ENCODE measurements at regions of chr5 and their contacts with region 1.

Region 1: GRCh38 chr5:39217365-39218281 is 1.7 kb downstream of the FYB1 start:
- DNase-seq: peak; percentile 87
- ATAC-seq: peak; percentile 74
- H3K4me3 Mint-ChIP-seq: peak overlapping the region; percentile 77
- H3K27ac Mint-ChIP-seq: peak overlapping the region; percentile 97
- H3K4me1 Mint-ChIP-seq: peaks cover 86% of the 10 kb centered on the region
- H3K27me3 Mint-ChIP-seq: no peaks in the 10 kb centered on the region

Region 2: DNA sequence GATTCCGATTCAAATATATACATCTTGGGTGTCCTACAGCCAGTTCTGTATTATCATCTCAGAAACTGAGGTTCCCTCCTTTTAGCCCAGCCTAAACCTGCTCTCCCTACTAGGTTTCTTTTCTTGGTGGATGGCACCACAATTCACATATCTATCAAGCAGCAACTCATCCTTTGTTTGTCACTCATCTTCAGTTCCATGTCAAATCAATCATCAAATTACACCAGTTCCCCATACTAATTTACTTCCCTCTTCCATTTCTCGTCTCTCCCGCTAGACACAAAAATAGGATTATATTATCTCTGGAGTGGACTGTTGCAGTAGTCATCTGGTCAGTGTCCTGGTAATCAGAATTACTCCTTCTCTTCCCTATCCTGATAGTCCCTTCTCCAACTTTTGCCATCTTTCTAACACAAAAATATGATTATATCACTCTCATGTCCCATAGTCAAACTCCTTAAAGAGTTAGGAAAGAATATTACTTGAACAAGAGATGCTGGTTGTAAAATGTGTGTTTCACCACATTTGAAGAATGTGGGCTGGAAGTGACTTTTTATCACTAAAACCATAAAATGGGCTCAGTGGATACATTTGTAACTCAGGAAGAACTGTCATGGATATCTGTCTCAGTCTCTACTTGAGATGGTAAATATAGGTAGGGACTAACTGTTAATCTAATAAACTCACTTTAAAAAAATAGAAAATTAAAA is 74.3 kb before region 1 on chr5:
- CTCF ChIA-PET with region 1: interaction called, 20 read pairs
- POLR2A ChIA-PET with region 1: no interaction called
- intact Hi-C with region 1: loop called in 1 of 2 experiments (anchors 2 kb)
- DNase-seq: no peak
- ATAC-seq: no peak
- H3K4me3 Mint-ChIP-seq: no peak overlapping the region
- H3K27ac Mint-ChIP-seq: no peak overlapping the region
- H3K4me1 Mint-ChIP-seq: peaks cover 40% of the 10 kb centered on the region
- H3K27me3 Mint-ChIP-seq: no peaks in the 10 kb centered on the region

Region 3: DNA sequence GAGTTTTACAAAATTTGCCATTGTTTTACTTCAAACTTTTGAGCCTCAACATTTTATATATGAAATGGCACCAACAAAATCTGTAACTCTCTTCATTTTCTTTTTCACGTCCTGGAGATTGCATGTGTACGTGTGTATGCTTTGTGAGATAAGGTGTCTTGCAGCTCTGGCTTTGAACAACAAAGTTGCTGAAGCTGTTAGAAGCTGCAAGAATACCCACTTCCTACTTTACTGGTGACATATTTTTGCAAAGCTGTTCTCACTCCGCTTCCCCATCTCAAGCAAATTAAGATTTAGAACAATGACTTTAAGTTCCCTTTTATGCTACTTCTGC is 40.0 kb before region 1 on chr5:
- CTCF ChIA-PET with region 1: interaction called, 22 read pairs
- POLR2A ChIA-PET with region 1: interaction called, 5 read pairs
- intact Hi-C with region 1: loop called in 1 of 2 experiments (anchors 1 kb)
- DNase-seq: no peak
- ATAC-seq: no peak
- H3K4me3 Mint-ChIP-seq: peak overlapping the region; percentile 59
- H3K27ac Mint-ChIP-seq: peak overlapping the region; percentile 80
- H3K4me1 Mint-ChIP-seq: peaks cover 94% of the 10 kb centered on the region
- H3K27me3 Mint-ChIP-seq: no peaks in the 10 kb centered on the region

Region 4: DNA sequence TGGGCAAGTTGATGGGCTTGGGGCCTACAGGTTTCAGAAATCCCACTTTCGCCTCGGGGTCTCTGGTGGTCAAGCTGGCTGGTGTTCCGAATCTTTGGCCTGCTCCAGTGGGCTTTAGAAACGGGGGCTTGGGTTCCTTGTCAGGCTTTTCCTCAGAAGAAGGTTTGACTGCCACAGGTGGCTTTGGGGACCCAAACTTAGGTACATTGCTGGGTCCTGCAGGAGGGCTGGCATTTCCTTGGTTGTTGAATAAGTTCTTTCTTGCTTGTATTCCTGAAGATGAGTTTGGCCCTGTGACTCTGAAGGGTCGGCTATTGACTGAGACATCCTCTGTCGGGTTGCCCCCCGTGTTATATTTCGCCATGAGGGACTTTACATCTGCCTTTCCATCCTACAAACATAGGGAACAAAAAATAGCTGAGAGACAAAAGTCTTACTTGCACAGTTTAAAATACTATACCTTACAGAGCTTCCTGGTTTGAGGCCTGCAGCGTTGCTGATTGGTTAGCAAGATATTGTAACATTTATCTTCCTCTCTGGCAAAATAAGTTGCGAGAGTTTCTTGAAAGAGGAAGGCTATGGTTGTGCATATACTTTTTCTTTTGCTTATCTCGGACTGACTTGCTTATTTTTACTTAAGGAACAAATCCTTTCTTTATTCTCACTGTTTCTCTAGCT is 14.9 kb before region 1 on chr5:
- CTCF ChIA-PET with region 1: interaction called, 52 read pairs
- POLR2A ChIA-PET with region 1: interaction called, 13 read pairs
- intact Hi-C with region 1: loop called in 1 of 2 experiments (anchors 2 kb)
- DNase-seq: peak; percentile 62
- ATAC-seq: peak; percentile 27
- H3K4me3 Mint-ChIP-seq: peak overlapping the region; percentile 81
- H3K27ac Mint-ChIP-seq: peak overlapping the region; percentile 93
- H3K4me1 Mint-ChIP-seq: peaks cover 36% of the 10 kb centered on the region
- H3K27me3 Mint-ChIP-seq: no peaks in the 10 kb centered on the region

Region 5: GRCh38 chr5:39274398-39275085 is 56.9 kb after region 1 on chr5:
- CTCF ChIA-PET with region 1: interaction called, 165 read pairs
- POLR2A ChIA-PET with region 1: no interaction called
- intact Hi-C with region 1: loop called in 1 of 2 experiments (anchors 2 kb)
- DNase-seq: no peak
- ATAC-seq: peak; percentile 62
- H3K4me3 Mint-ChIP-seq: peak overlapping the region; percentile 77
- H3K27ac Mint-ChIP-seq: peak overlapping the region; percentile 98
- H3K4me1 Mint-ChIP-seq: peaks cover 48% of the 10 kb centered on the region
- H3K27me3 Mint-ChIP-seq: no peaks in the 10 kb centered on the region

Region 6: GRCh38 chr5:39547553-39548154 is 330.0 kb after region 1 on chr5:
- CTCF ChIA-PET with region 1: interaction called, 9 read pairs
- POLR2A ChIA-PET with region 1: no interaction called
- intact Hi-C with region 1: loop called (anchors 1 to 5 kb)
- DNase-seq: peak; percentile 7
- ATAC-seq: no peak
- H3K4me3 Mint-ChIP-seq: no peak overlapping the region
- H3K27ac Mint-ChIP-seq: no peak overlapping the region
- H3K4me1 Mint-ChIP-seq: peaks cover 4% of the 10 kb centered on the region
- H3K27me3 Mint-ChIP-seq: peaks cover 9% of the 10 kb centered on the region

Measured in activated CD4-positive, alpha-beta T cell treated with anti-CD3 and anti-CD28 coated beads for 36 hours (primary cell).